ENCODE measurements at regions of chr16 and their contacts with region 1.

Region 1: DNA sequence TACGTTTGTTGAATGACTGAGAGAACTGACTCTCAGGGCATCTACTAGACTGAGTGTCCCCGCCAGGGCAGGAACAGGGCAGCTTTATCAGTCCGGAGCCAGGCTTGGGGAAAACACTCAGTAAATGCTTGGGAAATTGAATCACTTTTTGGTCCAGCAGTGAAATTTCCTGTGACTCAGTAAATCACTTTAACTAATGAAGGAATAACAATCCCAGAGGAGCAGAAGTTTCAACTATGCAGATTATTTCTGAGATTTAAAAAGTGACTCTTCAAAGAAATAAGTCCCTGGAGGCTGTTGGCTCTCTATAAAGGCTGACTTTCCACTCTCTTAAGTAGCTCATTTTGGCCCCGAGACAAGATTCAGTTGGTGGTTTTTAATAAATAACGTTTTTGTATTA is 101.8 kb downstream of the FOXL1 start:
- DNase-seq: no peak
- ATAC-seq: no peak
- H3K4me3 ChIP-seq: no peak overlapping the region
- H3K27ac ChIP-seq: no peak overlapping the region
- H3K4me1 ChIP-seq: no peaks in the 10 kb centered on the region
- H3K27me3 ChIP-seq: no peaks in the 10 kb centered on the region
- CTCF ChIP-seq: no peak

Region 2: GRCh38 chr16:86668136-86668910 is 11.8 kb before region 1 on chr16:
- CTCF ChIA-PET with region 1: interaction called, 6 read pairs
- POLR2A ChIA-PET with region 1: interaction called, 10 read pairs
- in situ Hi-C with region 1: no loop called
- intact Hi-C with region 1: no loop called
- DNase-seq: no peak
- ATAC-seq: no peak
- H3K4me3 ChIP-seq: no peak overlapping the region
- H3K27ac ChIP-seq: no peak overlapping the region
- H3K4me1 ChIP-seq: peaks cover 16% of the 10 kb centered on the region
- H3K27me3 ChIP-seq: no peaks in the 10 kb centered on the region
- CTCF ChIP-seq: no peak

Region 3: DNA sequence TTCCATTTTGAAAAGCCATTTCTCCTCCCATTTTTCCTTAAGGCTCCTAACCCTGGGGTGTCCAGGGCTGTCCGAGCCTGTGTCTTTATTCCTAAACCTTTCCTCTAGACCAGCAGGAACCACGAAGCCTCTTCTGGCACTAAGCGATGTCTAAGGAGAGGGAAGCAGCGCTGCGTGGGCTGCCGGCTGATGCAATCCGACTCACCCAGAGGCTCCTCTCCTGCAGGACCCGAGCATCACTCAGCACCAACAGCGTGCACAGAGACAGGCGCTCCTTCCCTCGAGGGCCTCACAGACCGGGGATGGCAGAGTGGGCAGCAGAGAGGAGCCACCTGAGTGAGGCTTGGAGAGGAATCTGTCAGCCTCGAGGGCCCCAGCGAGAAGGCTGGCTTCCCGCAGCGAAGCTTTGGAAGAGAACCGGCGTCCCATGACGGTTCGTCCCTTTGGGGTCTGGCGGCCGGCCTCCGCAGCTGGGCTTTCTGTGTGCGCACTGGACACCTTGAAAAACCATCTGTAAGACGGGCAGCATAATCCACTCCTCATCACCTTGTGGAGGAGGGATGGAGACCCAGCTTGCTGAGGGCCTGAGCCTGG is 72.5 kb after region 1 on chr16:
- CTCF ChIA-PET with region 1: no interaction called
- POLR2A ChIA-PET with region 1: interaction called, 13 read pairs
- in situ Hi-C with region 1: no loop called
- intact Hi-C with region 1: no loop called
- DNase-seq: no peak
- ATAC-seq: no peak
- H3K4me3 ChIP-seq: no peak overlapping the region
- H3K27ac ChIP-seq: no peak overlapping the region; the same call in 1 of the 2 replicates
- H3K4me1 ChIP-seq: no peaks in the 10 kb centered on the region
- H3K27me3 ChIP-seq: no peaks in the 10 kb centered on the region
- CTCF ChIP-seq: no peak